ENCODE measurements at regions of chr11 and their contacts with region 1.

Region 1: DNA sequence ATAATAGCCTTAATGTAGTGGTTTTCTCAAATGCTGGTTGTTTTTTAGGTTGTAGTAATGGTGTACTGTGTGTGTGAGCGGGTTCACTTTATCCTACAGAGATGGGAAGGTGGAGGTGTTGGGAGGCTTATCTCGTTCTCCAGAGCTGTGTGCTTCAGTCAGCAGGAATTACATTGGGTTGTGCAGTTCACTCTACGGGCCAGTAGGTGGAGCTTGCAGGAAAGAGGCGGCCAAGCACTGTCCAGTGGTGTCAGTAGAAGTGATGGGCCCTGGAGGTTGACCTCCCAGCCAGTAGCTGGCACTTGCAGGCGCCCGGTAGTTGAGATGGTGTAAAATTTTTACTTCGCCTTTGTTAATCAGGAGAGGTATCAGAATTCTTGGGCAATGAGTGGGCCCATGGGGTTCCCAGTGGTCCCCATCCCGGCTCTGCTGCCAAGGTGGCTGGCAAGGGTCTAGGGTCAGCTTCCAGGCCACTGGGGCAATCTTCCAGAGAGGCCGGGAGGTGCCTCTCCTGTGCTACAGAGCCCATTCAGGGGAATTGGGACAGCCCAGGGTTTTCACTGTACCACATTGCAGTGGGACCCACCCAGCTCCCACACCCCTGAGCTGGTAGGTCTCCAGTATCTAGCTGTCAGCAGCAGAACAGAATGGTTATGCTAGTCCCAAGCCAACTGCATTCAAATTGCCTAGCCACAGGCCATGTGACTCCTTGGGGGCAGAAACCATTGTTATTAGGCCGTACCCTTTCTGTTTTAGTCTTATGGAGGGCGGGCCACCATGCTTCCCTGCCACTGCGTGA is 43.9 kb downstream of the BIRC2 start:
- DNase-seq: peak; percentile 63
- H3K4me3 ChIP-seq: no peak overlapping the region
- H3K27ac ChIP-seq: no peak overlapping the region
- H3K4me1 ChIP-seq: peaks cover under 1% of the 10 kb centered on the region
- H3K27me3 ChIP-seq: no peaks in the 10 kb centered on the region
- CTCF ChIP-seq: peak; percentile 83 to 88
- POLR2A ChIP-seq: no peak

Region 2: DNA sequence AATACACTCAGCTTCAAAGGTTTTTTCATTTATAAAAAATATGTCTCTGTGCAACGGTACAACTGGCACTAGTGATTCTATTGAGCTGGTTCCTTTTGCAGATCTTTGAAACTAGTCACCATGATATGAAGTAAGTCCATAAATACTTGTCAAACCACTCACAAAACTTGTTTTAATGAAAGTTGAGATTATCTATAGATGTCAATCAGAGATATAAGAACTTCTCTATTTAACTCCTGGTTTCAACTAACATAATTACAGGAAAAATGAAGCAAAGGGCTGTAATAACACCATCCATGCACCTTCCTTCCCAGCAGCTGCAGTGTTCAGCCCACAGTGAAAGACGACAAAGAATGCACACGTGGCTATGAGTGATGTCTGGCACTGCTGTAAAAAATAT is 17.0 kb after region 1 on chr11:
- CTCF ChIA-PET with region 1: interaction called, 36 read pairs
- POLR2A ChIA-PET with region 1: interaction called, 3 read pairs
- dilution Hi-C with region 1: no loop called
- intact Hi-C with region 1: no loop called
- DNase-seq: peak; percentile 44
- H3K4me3 ChIP-seq: no peak overlapping the region
- H3K27ac ChIP-seq: no peak overlapping the region
- H3K4me1 ChIP-seq: no peaks in the 10 kb centered on the region
- H3K27me3 ChIP-seq: no peaks in the 10 kb centered on the region
- CTCF ChIP-seq: no peak
- POLR2A ChIP-seq: no peak